ENCODE measurements at regions of chr1 and their contacts with region 1.

Region 1: DNA sequence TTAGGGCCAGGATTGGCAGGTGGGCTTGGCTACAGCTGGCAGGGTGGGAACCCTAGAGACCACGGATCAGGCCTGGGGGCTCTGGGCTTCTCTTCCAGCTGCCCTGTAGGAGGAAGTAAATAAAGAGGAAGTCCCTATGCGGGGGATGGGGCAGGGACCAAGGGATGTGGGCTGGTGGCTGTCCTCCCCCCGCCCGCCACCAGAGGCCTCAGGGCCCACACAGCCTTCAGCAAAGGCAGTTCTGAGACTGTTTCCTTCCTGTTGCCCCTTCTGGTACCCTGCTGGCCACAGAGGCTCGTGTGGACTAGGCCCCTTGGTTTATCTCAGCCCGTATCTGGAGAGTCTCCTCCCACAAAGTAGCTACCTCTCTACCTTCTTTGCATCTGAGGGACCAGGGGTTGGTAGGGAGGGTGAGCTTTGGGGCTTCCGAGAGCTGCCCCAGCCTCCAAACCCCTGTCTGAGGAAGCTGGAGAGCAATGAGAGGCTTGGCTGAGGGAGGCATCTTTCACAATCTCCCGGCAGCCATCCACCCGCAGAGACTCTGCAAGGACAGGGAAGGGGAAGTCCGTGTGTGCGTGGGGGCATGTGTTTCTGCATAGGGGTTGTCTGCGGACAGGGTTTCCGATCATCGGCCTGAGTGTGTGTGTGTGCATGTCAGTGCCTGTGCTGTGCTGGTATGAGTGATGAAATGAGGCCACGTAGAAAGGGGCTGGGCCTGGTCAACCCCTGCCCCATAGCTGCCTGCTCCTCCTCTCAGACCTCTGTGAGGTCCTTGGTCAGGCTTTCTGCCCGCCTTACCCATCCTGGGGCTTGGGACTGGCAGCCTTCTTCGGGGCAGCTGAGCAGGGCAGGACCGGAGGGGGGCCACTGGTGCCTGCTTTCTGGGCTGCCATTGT is 12.5 kb downstream of the RPS6KA1 start:
- DNase-seq: peak; percentile 70 to 90 (median 71)
- H3K4me3 ChIP-seq: peak overlapping the region; percentile 12 to 34
- H3K4me3 Mint-ChIP-seq: peak overlapping the region; percentile 78 to 89 (median 84)
- H3K27ac ChIP-seq: peak overlapping the region; percentile 75
- H3K27ac Mint-ChIP-seq: peak overlapping the region; percentile 94 to 98 (median 95)
- H3K4me1 ChIP-seq: peaks cover 97% of the 10 kb centered on the region
- H3K4me1 Mint-ChIP-seq: peaks cover 61 to 96% (median 84%) of the 10 kb centered on the region in 4 donors
- H3K27me3 ChIP-seq: no peaks in the 10 kb centered on the region
- H3K27me3 Mint-ChIP-seq: no peaks in the 10 kb centered on the region

Region 2: GRCh38 chr1:26482921-26483680 is 59.0 kb before region 1 on chr1:
- CTCF ChIA-PET with region 1: no interaction called
- POLR2A ChIA-PET with region 1: no interaction called
- intact Hi-C with region 1: no loop called
- DNase-seq: no peak
- H3K4me3 ChIP-seq: no peak overlapping the region
- H3K4me3 Mint-ChIP-seq: no peak overlapping the region
- H3K27ac ChIP-seq: no peak overlapping the region
- H3K27ac Mint-ChIP-seq: peak overlapping the region in 5 of 7 donors; percentile 10 to 81 (median 65)
- H3K4me1 ChIP-seq: no peaks in the 10 kb centered on the region
- H3K4me1 Mint-ChIP-seq: peaks cover 4 to 10% (median 5%) of the 10 kb centered on the region in 4 donors
- H3K27me3 ChIP-seq: no peaks in the 10 kb centered on the region
- H3K27me3 Mint-ChIP-seq: no peaks in the 10 kb centered on the region

Region 3: GRCh38 chr1:26529655-26530409 is 12.2 kb before region 1 on chr1 and contains the start of gene RPS6KA1:
- CTCF ChIA-PET with region 1: interaction called, 93 read pairs
- POLR2A ChIA-PET with region 1: interaction called, 62 read pairs
- intact Hi-C with region 1: loop called (anchors 1 kb)
- DNase-seq: peak; percentile 51 to 67 (median 54)
- H3K4me3 ChIP-seq: peak within 1 kb of the TSS; percentile 65 to 75
- H3K4me3 Mint-ChIP-seq: peak within 1 kb of the TSS; percentile 89 to 98 (median 91)
- H3K27ac ChIP-seq: peak within 1 kb of the TSS; percentile 62
- H3K27ac Mint-ChIP-seq: peak within 1 kb of the TSS; percentile 78 to 94 (median 87)
- H3K4me1 ChIP-seq: peaks cover 44% of the 10 kb centered on the region
- H3K4me1 Mint-ChIP-seq: peaks cover 16 to 48% (median 30%) of the 10 kb centered on the region in 4 donors
- H3K27me3 ChIP-seq: no peaks in the 10 kb centered on the region
- H3K27me3 Mint-ChIP-seq: no peaks in the 10 kb centered on the region
- total RNA-seq, gene RPS6KA1: 106 to 108 TPM

Region 4: GRCh38 chr1:26555550-26556510 is 13.8 kb after region 1 on chr1:
- CTCF ChIA-PET with region 1: interaction called, 96 read pairs
- POLR2A ChIA-PET with region 1: interaction called, 7 read pairs
- intact Hi-C with region 1: no loop called
- DNase-seq: no peak
- H3K4me3 ChIP-seq: no peak overlapping the region
- H3K4me3 Mint-ChIP-seq: no peak overlapping the region
- H3K27ac ChIP-seq: no peak overlapping the region
- H3K27ac Mint-ChIP-seq: peak overlapping the region in 3 of 7 donors; percentile 15 to 62 (median 23)
- H3K4me1 ChIP-seq: no peaks in the 10 kb centered on the region
- H3K4me1 Mint-ChIP-seq: peaks cover 0 to 5% (median under 1%) of the 10 kb centered on the region in 4 donors
- H3K27me3 ChIP-seq: no peaks in the 10 kb centered on the region
- H3K27me3 Mint-ChIP-seq: no peaks in the 10 kb centered on the region

Region 5: DNA sequence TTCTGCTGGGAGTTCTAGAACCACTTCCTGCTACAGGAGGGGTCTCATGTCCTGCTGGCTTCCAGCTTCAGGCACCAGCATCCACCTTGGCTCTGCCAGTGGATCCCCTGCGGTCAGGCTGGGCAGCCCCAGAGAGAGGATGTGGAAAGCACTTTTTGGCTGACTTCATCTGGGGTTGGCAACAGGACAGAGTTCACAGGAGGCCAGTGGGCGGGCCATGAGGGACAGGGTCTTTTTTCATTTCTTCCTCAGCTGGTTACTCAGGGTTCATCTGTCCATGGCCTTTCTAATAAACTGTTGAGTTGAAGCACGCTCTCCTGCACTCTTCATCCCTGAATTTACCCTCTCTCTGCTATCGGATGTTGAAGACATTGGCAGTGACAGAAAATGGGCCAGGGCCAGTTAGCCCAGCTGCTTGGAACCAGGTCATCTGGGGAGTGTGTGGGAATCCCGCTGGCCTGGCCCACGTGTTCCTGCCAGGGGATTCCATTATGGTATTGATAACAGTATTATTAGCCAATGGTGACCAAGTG is 32.7 kb after region 1 on chr1:
- CTCF ChIA-PET with region 1: interaction called, 12 read pairs
- POLR2A ChIA-PET with region 1: interaction called, 6 read pairs
- intact Hi-C with region 1: no loop called
- DNase-seq: no peak
- H3K4me3 ChIP-seq: no peak overlapping the region
- H3K4me3 Mint-ChIP-seq: no peak overlapping the region
- H3K27ac ChIP-seq: no peak overlapping the region
- H3K27ac Mint-ChIP-seq: no peak overlapping the region
- H3K4me1 ChIP-seq: no peaks in the 10 kb centered on the region
- H3K4me1 Mint-ChIP-seq: peaks cover 6 to 17% (median 11%) of the 10 kb centered on the region in 4 donors
- H3K27me3 ChIP-seq: no peaks in the 10 kb centered on the region
- H3K27me3 Mint-ChIP-seq: no peaks in the 10 kb centered on the region

Region 6: DNA sequence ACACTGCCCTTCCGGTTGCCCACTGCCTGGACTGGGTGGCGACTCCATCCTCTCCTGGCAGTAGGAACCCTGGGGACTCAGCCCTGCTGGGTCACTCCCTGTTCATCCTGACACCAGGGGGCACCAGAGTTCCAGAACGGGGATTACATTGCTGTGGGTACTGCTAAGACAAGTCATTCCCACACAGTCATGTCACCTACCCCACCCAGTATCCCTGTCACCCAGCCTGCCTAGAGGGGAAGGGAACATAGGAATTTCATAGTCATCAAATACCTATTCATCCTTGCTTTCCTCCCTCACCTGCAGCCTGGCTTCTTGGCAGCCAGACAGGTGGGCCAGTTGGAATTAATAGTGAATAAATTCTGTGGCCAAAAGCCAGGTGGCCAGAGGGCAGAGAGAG is 311.1 kb after region 1 on chr1:
- CTCF ChIA-PET with region 1: no interaction called
- POLR2A ChIA-PET with region 1: no interaction called
- intact Hi-C with region 1: no loop called
- DNase-seq: peak; percentile 64 to 75 (median 69)
- H3K4me3 ChIP-seq: no peak overlapping the region
- H3K4me3 Mint-ChIP-seq: no peak overlapping the region
- H3K27ac ChIP-seq: no peak overlapping the region
- H3K27ac Mint-ChIP-seq: peak overlapping the region in 2 of 7 donors; percentile 11 to 52
- H3K4me1 ChIP-seq: no peaks in the 10 kb centered on the region
- H3K4me1 Mint-ChIP-seq: peaks cover 1 to 9% (median 4%) of the 10 kb centered on the region in 4 donors
- H3K27me3 ChIP-seq: no peaks in the 10 kb centered on the region
- H3K27me3 Mint-ChIP-seq: no peaks in the 10 kb centered on the region